ENCODE measurements at regions of chr5 and their contacts with region 1.

Region 1: DNA sequence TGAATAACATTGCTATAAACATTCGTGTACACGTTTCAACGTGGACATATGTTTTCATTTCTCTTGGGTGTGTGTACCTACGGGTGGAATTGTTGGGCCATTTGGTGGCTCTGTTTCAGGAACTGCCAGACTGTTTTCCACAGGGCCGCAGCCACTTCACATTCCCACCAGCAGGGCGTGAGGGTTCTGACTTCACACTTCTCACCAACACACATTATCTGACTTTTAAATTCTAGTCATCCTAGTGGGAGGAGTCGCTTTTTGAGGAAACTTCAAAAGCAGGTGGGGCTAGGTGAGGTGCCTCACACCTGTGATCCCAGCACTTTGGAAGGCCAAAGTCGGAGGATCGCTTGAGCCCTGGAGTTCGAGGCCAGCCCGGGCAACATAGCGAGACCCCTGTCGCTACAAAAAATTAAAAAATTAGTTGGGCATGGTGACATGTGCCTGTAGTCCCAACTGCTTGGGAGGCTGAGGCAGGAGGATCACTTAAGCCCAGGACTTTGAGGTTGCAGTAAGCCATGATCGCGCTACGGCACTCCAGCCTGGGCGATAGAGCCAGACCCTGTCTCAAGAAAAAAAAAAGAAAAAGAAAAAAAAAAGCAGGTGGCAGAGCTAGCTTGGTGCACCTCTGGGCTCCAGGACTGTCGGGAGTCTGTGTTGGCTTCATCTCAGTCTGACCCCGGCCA is 28.5 kb downstream of the TSPAN17 start:
- DNase-seq: no peak
- ATAC-seq: no peak
- H3K4me3 ChIP-seq: no peak overlapping the region
- H3K27ac ChIP-seq: no peak overlapping the region
- H3K4me1 ChIP-seq: peaks cover 0 to 45% (median 38%) of the 10 kb centered on the region in 9 donors
- H3K27me3 ChIP-seq: peaks cover 0 to 47% (median 28%) of the 10 kb centered on the region in 7 donors
- CTCF ChIP-seq: peak in 8 of 9 donors; percentile 12 to 51 (median 34)

Region 2: DNA sequence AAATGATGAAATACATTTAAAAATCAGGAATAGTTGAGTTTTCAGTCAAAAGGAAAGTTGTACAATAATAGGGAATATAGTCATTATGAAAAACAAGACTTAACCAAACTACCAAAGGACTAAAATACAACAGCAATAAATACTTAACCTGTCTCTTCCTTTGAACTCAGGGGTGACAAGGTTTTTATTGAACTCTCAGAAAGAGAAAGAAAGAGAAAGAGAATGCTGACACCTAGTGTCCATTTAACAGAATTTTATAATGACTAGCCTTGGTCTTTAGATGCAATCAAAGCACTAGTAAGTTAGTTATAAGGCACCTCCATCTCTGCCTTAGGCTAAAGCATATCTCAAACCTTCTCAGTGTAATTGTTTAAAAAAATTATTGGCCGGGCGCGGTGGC is 283.2 kb after region 1 on chr5:
- intact Hi-C with region 1: loop called in 1 of 10 experiments (anchors 5 kb)
- DNase-seq: no peak
- ATAC-seq: peak in 2 of 8 donors; percentile 34 to 49
- H3K4me3 ChIP-seq: no peak overlapping the region
- H3K27ac ChIP-seq: no peak overlapping the region
- H3K4me1 ChIP-seq: peaks cover 0 to 20% (median 6%) of the 10 kb centered on the region in 9 donors
- H3K27me3 ChIP-seq: no peaks in the 10 kb centered on the region
- CTCF ChIP-seq: peak in 8 of 9 donors; percentile 16 to 62 (median 50)